CD4-positive, alpha-beta T cell (primary cell): ENCODE measurements at regions of chr4 and their contacts with region 1.

Region 1: GRCh38 chr4:74531963-74532794 is 87.2 kb downstream of the AREG start:
- DNase-seq: peak in 5 of 14 experiments; percentile 3 to 60 (median 34)
- ATAC-seq: no peak
- H3K4me3 ChIP-seq: no peak overlapping the region
- H3K4me3 Mint-ChIP-seq: no peak overlapping the region
- H3K27ac ChIP-seq: no peak overlapping the region
- H3K27ac Mint-ChIP-seq: no peak overlapping the region
- H3K4me1 ChIP-seq: no peaks in the 10 kb centered on the region
- H3K4me1 Mint-ChIP-seq: no peaks in the 10 kb centered on the region
- H3K27me3 ChIP-seq: no peaks in the 10 kb centered on the region
- H3K27me3 Mint-ChIP-seq: peaks cover 14% of the 10 kb centered on the region
- CTCF ChIP-seq: peak; percentile 59

Region 2: DNA sequence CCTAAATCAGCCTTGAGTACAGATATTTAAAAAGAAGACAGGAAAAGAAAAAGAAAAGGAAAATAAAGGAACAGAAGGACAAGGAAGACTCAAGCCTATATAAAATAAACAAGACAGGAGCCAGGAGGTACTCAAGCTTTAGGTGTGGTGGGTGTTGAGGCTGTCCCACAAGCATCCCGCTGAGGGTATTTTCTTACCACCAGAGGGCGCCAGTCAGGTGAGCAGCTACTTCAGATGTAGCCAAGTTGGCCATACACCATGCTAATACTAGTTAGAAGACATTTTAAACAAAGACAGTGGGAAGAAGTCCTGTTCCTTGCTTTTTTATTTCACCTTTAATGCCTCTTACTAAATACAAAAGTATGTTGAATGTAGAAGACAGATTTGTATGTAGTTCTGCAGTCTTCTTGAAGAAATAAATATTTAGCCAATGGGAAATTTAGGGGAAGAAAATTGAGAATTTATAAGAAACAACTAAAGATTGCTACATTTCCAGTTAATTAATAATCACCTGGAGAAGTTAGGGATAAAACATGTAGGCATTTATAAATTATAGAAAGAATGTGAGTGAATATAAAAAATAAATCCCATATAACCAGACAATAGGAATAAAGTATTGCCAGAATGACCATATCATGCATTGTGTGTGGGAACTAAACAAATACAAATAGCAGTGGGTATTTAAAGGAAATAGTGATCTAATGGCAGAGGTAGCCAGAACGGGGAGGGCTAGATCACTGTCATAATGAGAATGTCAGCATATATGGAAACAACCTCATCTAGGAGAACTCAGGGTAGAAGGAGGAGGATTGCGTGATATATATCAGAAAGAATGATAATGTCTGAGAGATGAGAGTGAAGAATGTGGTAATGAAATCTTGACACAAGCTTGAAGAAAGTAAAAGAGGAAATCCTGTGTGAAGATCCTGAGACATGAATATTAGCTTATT is 303.2 kb before region 1 on chr4:
- CTCF ChIA-PET with region 1: no interaction called
- POLR2A ChIA-PET with region 1: no interaction called
- intact Hi-C with region 1: loop called in 1 of 2 experiments (anchors 10 kb)
- DNase-seq: peak; percentile 51 to 84 (median 66)
- ATAC-seq: peak; percentile 75
- H3K4me3 ChIP-seq: no peak overlapping the region
- H3K4me3 Mint-ChIP-seq: no peak overlapping the region
- H3K27ac ChIP-seq: no peak overlapping the region
- H3K27ac Mint-ChIP-seq: no peak overlapping the region
- H3K4me1 ChIP-seq: no peaks in the 10 kb centered on the region
- H3K4me1 Mint-ChIP-seq: no peaks in the 10 kb centered on the region
- H3K27me3 ChIP-seq: no peaks in the 10 kb centered on the region
- H3K27me3 Mint-ChIP-seq: no peaks in the 10 kb centered on the region
- CTCF ChIP-seq: peak; percentile 91

Region 3: GRCh38 chr4:74376888-74377483 is 155.2 kb before region 1 on chr4:
- CTCF ChIA-PET with region 1: interaction called, 11 read pairs
- POLR2A ChIA-PET with region 1: no interaction called
- intact Hi-C with region 1: loop called (anchors 1 kb)
- DNase-seq: peak in 3 of 14 experiments; percentile 55 to 68 (median 67)
- ATAC-seq: peak; percentile 86
- H3K4me3 ChIP-seq: no peak overlapping the region
- H3K4me3 Mint-ChIP-seq: no peak overlapping the region
- H3K27ac ChIP-seq: no peak overlapping the region
- H3K27ac Mint-ChIP-seq: no peak overlapping the region
- H3K4me1 ChIP-seq: no peaks in the 10 kb centered on the region
- H3K4me1 Mint-ChIP-seq: no peaks in the 10 kb centered on the region
- H3K27me3 ChIP-seq: no peaks in the 10 kb centered on the region
- H3K27me3 Mint-ChIP-seq: peaks cover 3% of the 10 kb centered on the region
- CTCF ChIP-seq: peak; percentile 79